ENCODE measurements at regions of chr9 and their contacts with region 1.

Region 1: GRCh38 chr9:14353222-14354056 is 39.5 kb upstream of the NFIB start:
- DNase-seq: peak; percentile 94
- ATAC-seq: peak; percentile 77

Region 2: DNA sequence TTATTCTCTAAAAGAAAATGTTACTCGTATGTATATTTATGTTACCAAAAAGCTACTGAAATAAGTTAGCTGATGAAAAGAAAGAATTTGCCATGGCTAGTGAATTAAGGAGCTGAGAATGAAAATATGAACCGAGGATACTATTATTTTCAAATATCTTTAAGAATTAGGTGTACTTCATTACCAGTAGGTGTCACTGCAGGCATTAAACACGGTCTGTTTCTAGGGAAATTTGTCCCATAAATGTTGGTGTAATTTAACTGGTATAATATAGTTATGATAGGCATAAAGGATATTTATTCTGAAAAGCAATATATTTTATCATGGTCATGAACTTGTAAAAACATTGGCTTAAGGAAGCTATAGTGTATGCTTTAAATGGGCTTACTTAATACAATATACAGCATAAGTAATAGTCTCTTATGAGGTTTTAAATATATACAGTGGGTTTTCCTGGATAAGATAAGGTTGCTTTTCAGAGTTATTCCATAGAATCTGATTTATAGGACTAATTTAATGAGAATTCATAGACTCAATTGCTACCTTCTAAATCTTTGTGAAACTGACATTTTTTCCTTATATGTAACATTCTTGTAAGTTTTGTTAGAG is 1001.6 kb before region 1 on chr9:
- intact Hi-C with region 1: loop called (anchors 10 kb)
- DNase-seq: no peak
- ATAC-seq: no peak

Region 3: GRCh38 chr9:13446938-13447842 is 906.2 kb before region 1 on chr9:
- intact Hi-C with region 1: loop called (anchors 5 kb)
- DNase-seq: no peak
- ATAC-seq: no peak

Region 4: GRCh38 chr9:14096258-14096922 is 257.0 kb before region 1 on chr9:
- intact Hi-C with region 1: loop called (anchors 5 kb)
- DNase-seq: no peak
- ATAC-seq: peak; percentile 75

Region 5: DNA sequence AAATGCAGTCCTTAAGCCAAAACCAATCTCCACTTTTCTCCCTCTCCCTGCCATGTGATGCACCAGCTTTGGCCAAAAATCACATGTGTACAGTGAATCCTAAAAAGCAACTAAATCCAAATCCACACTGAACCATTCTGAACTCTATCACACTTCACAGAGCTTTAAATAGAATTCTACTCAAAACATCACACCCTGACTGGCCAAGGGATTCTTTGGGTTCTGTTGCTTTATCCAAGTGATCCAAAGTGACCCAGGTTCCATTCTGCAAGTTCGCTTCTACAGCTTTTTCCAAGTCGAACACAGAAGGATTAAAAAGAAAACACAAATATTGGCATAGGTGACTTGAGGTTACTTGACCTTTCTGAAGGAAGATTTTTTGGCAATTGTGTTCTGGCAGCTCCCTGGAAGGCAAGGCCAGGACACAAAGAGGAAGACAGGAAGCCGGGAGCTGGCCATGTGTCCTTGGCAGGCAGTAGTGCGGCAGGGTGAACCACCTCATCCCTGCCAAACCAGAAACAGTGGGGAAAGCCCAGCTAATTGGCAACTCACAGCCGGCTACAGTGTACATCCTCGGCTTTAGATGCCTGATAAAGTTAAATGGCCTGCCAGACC is 154.5 kb before region 1 on chr9:
- intact Hi-C with region 1: no loop called
- DNase-seq: peak; percentile 78
- ATAC-seq: peak; percentile 87

Region 6: DNA sequence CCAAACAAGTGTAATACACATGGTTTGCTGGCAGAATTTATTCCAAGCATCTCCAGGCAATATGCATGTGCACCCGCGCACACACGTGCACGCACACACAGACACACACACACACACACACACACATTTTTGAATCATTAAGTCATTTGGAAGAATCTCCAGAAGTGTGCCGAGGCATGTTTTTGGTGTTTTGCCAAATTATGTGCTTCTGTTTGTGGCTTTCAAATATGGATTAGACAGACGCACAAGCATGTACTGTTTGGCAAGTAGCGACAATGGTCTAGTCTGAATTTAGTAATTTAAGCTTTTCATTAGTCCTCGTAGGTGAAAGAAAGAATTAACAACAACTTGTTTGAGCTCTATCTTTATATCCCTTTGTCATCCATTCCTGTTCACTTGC is 76.2 kb before region 1 on chr9:
- intact Hi-C with region 1: loop called (anchors 5 kb)
- DNase-seq: no peak
- ATAC-seq: peak; percentile 43

Measured in Right ventricle myocardium inferior (tissue), 1 donor.